ENCODE measurements at regions of chr1 and their contacts with region 1.

Region 1: DNA sequence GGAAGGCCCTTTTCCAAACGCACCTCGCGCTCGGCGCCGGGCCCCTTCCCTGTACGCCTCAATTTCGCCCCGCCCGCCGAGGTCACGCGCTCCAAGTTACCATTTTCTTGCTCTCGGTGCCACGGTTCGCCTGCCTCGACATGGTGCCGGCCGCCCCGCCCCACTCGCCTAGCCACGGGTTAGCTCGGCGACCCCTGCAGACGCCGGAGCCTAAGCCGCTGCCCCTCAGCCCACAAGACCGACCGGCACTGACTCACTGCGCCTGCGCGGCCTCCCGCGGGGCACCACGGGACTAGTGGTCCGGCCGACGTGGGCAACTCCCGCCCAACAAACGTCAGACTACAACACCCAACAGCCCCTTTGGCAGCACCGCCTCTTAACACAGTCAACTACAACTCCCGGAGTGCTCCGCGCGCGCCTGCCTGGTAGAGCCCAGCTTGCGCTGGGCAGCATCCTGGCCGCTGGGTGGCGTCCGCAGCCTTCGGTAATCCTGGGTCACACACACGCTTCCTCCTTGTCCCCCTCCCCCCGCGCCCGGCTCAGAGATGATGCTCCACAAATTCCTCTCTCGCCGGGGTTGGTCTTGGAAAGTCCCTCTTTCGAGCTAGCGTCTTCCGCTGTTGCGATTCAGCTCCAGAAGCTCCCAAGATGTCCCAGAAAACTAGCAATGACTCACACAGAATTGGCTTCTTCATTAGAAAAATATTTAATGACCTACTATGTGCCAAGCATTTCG is at the start of gene TRAPPC3:
- DNase-seq: peak; percentile 99 to 100 (median 99)
- H3K4me3 ChIP-seq: peak within 1 kb of the TSS; percentile 70 to 98
- H3K4me3 Mint-ChIP-seq: peak within 1 kb of the TSS; percentile 95 to 100 (median 98)
- H3K27ac ChIP-seq: peak within 1 kb of the TSS; percentile 88
- H3K27ac Mint-ChIP-seq: peak within 1 kb of the TSS; percentile 94 to 100 (median 99)
- H3K4me1 ChIP-seq: peaks cover 68% of the 10 kb centered on the region
- H3K4me1 Mint-ChIP-seq: peaks cover 46 to 84% (median 63%) of the 10 kb centered on the region in 4 donors
- H3K27me3 ChIP-seq: no peaks in the 10 kb centered on the region
- H3K27me3 Mint-ChIP-seq: no peaks in the 10 kb centered on the region
- total RNA-seq, gene TRAPPC3: 51.8 to 56.4 TPM

Region 2: DNA sequence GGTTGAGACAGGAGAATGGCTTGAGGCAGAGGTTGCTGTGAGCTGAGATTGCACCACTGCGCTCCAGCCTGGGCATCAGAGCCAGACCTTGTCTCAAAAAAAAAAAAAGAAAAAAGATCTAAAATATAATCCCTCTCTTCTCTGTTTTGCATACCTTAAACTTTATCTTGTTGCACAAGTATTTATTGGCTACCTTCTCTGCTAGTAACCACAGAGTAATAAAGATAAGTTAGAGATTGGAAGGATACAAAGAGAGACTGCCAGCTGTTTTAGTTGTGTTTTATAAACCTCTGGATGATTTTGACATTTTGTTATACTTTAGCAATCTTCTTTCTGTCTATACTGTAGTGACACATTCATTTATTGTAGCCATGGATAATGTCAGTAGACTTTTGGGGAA is 190.8 kb before region 1 on chr1:
- CTCF ChIA-PET with region 1: no interaction called
- POLR2A ChIA-PET with region 1: no interaction called
- intact Hi-C with region 1: no loop called
- DNase-seq: no peak
- H3K4me3 ChIP-seq: no peak overlapping the region
- H3K4me3 Mint-ChIP-seq: no peak overlapping the region
- H3K27ac ChIP-seq: no peak overlapping the region
- H3K27ac Mint-ChIP-seq: peak overlapping the region in 1 of 7 donors; percentile 22
- H3K4me1 ChIP-seq: no peaks in the 10 kb centered on the region
- H3K4me1 Mint-ChIP-seq: peaks cover 5 to 12% (median 7%) of the 10 kb centered on the region in 4 donors
- H3K27me3 ChIP-seq: no peaks in the 10 kb centered on the region
- H3K27me3 Mint-ChIP-seq: no peaks in the 10 kb centered on the region

Region 3: GRCh38 chr1:36099681-36100341 is 49.6 kb before region 1 on chr1:
- CTCF ChIA-PET with region 1: interaction called, 19 read pairs
- POLR2A ChIA-PET with region 1: interaction called, 6 read pairs
- intact Hi-C with region 1: no loop called
- DNase-seq: peak; percentile 62 to 71 (median 70)
- H3K4me3 ChIP-seq: no peak overlapping the region
- H3K4me3 Mint-ChIP-seq: peak overlapping the region in 2 of 8 donors; percentile 26 to 39
- H3K27ac ChIP-seq: no peak overlapping the region
- H3K27ac Mint-ChIP-seq: peak overlapping the region in 1 of 7 donors; percentile 50
- H3K4me1 ChIP-seq: no peaks in the 10 kb centered on the region
- H3K4me1 Mint-ChIP-seq: peaks cover 0 to 4% (median under 1%) of the 10 kb centered on the region in 4 donors
- H3K27me3 ChIP-seq: no peaks in the 10 kb centered on the region
- H3K27me3 Mint-ChIP-seq: no peaks in the 10 kb centered on the region

Region 4: GRCh38 chr1:36166938-36167910 is 17.8 kb after region 1 on chr1:
- CTCF ChIA-PET with region 1: interaction called, 40 read pairs
- POLR2A ChIA-PET with region 1: interaction called, 251 read pairs
- intact Hi-C with region 1: no loop called
- DNase-seq: no peak
- H3K4me3 ChIP-seq: no peak overlapping the region
- H3K4me3 Mint-ChIP-seq: peak overlapping the region in 1 of 8 donors; percentile 4
- H3K27ac ChIP-seq: no peak overlapping the region
- H3K27ac Mint-ChIP-seq: peak overlapping the region; percentile 50 to 90 (median 87)
- H3K4me1 ChIP-seq: peaks cover 42% of the 10 kb centered on the region
- H3K4me1 Mint-ChIP-seq: peaks cover 39 to 66% (median 50%) of the 10 kb centered on the region in 4 donors
- H3K27me3 ChIP-seq: no peaks in the 10 kb centered on the region
- H3K27me3 Mint-ChIP-seq: no peaks in the 10 kb centered on the region

Region 5: DNA sequence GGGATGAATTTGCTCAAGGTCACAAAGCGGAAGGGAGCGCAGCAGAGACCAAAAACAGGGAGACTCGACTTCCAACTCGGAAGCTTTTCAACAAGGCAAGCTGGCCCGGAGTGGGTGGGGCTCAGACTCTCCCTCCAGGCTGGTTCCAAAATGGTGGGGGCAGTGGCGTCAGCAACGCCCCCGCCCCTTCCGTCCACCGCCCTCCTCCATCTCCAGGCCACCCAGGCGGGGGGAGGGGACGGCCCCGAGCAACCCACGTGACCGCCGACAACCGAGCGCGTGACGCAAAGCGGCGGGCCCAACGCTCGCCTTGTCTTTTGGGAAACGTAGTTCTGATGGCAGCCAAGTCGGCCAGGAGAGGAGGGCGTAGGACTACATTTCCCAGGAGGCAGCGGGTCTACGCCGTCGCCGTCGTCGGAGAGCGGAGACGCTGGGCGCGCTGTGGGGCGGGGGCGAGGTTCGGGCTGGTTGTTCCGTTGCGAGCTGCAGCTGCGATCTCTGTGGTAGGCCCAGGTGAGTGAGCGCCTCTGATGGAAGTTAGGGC is 74.7 kb after region 1 on chr1 and contains the start of gene THRAP3:
- CTCF ChIA-PET with region 1: interaction called, 43 read pairs
- POLR2A ChIA-PET with region 1: interaction called, 83 read pairs
- intact Hi-C with region 1: loop called (anchors 1 kb)
- DNase-seq: peak; percentile 100
- H3K4me3 ChIP-seq: peak within 1 kb of the TSS; percentile 77 to 97
- H3K4me3 Mint-ChIP-seq: peak within 1 kb of the TSS; percentile 95 to 99 (median 98)
- H3K27ac ChIP-seq: peak within 1 kb of the TSS; percentile 98
- H3K27ac Mint-ChIP-seq: peak within 1 kb of the TSS; percentile 97 to 100 (median 100)
- H3K4me1 ChIP-seq: peaks cover 45% of the 10 kb centered on the region
- H3K4me1 Mint-ChIP-seq: peaks cover 19 to 46% (median 29%) of the 10 kb centered on the region in 4 donors
- H3K27me3 ChIP-seq: no peaks in the 10 kb centered on the region
- H3K27me3 Mint-ChIP-seq: no peaks in the 10 kb centered on the region
- total RNA-seq, gene THRAP3: 127 to 130 TPM

Region 6: GRCh38 chr1:36369061-36369861 is 219.9 kb after region 1 on chr1:
- CTCF ChIA-PET with region 1: interaction called, 15 read pairs
- POLR2A ChIA-PET with region 1: interaction called, 7 read pairs
- intact Hi-C with region 1: no loop called
- DNase-seq: peak; percentile 76 to 80 (median 79)
- H3K4me3 ChIP-seq: no peak overlapping the region
- H3K4me3 Mint-ChIP-seq: peak overlapping the region in 6 of 8 donors; percentile 11 to 72 (median 28)
- H3K27ac ChIP-seq: peak overlapping the region; percentile 24
- H3K27ac Mint-ChIP-seq: peak overlapping the region; percentile 57 to 89 (median 82)
- H3K4me1 ChIP-seq: peaks cover 72% of the 10 kb centered on the region
- H3K4me1 Mint-ChIP-seq: peaks cover 46 to 75% (median 64%) of the 10 kb centered on the region in 4 donors
- H3K27me3 ChIP-seq: no peaks in the 10 kb centered on the region
- H3K27me3 Mint-ChIP-seq: no peaks in the 10 kb centered on the region

Region 7: GRCh38 chr1:36393686-36394085 is 244.3 kb after region 1 on chr1:
- CTCF ChIA-PET with region 1: no interaction called
- POLR2A ChIA-PET with region 1: no interaction called
- intact Hi-C with region 1: no loop called
- DNase-seq: no peak
- H3K4me3 ChIP-seq: no peak overlapping the region
- H3K4me3 Mint-ChIP-seq: no peak overlapping the region
- H3K27ac ChIP-seq: no peak overlapping the region
- H3K27ac Mint-ChIP-seq: peak overlapping the region in 1 of 7 donors; percentile 13
- H3K4me1 ChIP-seq: peaks cover 20% of the 10 kb centered on the region
- H3K4me1 Mint-ChIP-seq: peaks cover 13 to 36% (median 25%) of the 10 kb centered on the region in 4 donors
- H3K27me3 ChIP-seq: no peaks in the 10 kb centered on the region
- H3K27me3 Mint-ChIP-seq: no peaks in the 10 kb centered on the region

Region 8: GRCh38 chr1:36463803-36464604 is 314.6 kb after region 1 on chr1 and contains the start of gene MRPS15:
- CTCF ChIA-PET with region 1: no interaction called
- POLR2A ChIA-PET with region 1: no interaction called
- intact Hi-C with region 1: loop called (anchors 1 kb)
- DNase-seq: peak; percentile 91 to 95 (median 92)
- H3K4me3 ChIP-seq: peak within 1 kb of the TSS; percentile 83 to 87
- H3K4me3 Mint-ChIP-seq: peak within 1 kb of the TSS; percentile 96 to 99 (median 98)
- H3K27ac ChIP-seq: peak within 1 kb of the TSS; percentile 80
- H3K27ac Mint-ChIP-seq: peak within 1 kb of the TSS; percentile 95 to 98 (median 97)
- H3K4me1 ChIP-seq: peaks cover 23% of the 10 kb centered on the region
- H3K4me1 Mint-ChIP-seq: peaks cover 19 to 50% (median 31%) of the 10 kb centered on the region in 4 donors
- H3K27me3 ChIP-seq: no peaks in the 10 kb centered on the region
- H3K27me3 Mint-ChIP-seq: no peaks in the 10 kb centered on the region
- total RNA-seq, gene MRPS15: 32.5 to 33.9 TPM

Measured in CD4-positive, alpha-beta memory T cell (primary cell).